ENCODE measurements at regions of chr4 and their contacts with region 1.

Region 1: GRCh38 chr4:6673660-6674499 is 19.8 kb upstream of the S100P start:
- DNase-seq: peak; percentile 96
- ATAC-seq: peak; percentile 77
- H3K4me3 Mint-ChIP-seq: peak overlapping the region; percentile 93
- H3K27ac Mint-ChIP-seq: peak overlapping the region; percentile 99
- H3K4me1 Mint-ChIP-seq: peaks cover 40% of the 10 kb centered on the region
- H3K27me3 Mint-ChIP-seq: no peaks in the 10 kb centered on the region

Region 2: DNA sequence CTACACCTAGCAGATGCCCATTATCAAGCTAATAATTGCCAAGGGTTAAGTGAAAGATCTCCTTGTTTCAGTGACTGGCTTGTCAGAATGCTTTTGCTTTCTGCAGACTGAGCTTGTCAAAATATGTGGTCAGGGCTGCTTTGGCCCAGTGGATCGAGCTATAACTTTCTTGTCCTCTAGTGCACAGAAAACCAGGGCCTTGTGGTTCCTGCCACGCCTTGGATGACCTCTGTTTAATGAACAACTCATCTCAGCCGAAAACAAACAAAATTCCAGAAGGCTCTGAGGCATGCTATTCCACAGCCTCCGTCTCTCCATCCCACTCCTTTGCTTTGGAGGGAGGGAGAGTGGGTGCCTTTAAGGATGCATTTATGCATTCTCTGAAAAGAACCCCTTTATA is 951.6 kb before region 1 on chr4:
- CTCF ChIA-PET with region 1: no interaction called
- POLR2A ChIA-PET with region 1: no interaction called
- intact Hi-C with region 1: no loop called
- DNase-seq: no peak
- ATAC-seq: no peak
- H3K4me3 Mint-ChIP-seq: no peak overlapping the region
- H3K27ac Mint-ChIP-seq: no peak overlapping the region
- H3K4me1 Mint-ChIP-seq: no peaks in the 10 kb centered on the region
- H3K27me3 Mint-ChIP-seq: peaks cover 6% of the 10 kb centered on the region

Region 3: GRCh38 chr4:6658597-6659075 is 15.2 kb before region 1 on chr4:
- CTCF ChIA-PET with region 1: interaction called, 6 read pairs
- POLR2A ChIA-PET with region 1: interaction called, 13 read pairs
- intact Hi-C with region 1: no loop called
- DNase-seq: peak; percentile 59
- ATAC-seq: peak; percentile 81
- H3K4me3 Mint-ChIP-seq: peak overlapping the region; percentile 43
- H3K27ac Mint-ChIP-seq: no peak overlapping the region
- H3K4me1 Mint-ChIP-seq: peaks cover 12% of the 10 kb centered on the region
- H3K27me3 Mint-ChIP-seq: peaks cover 21% of the 10 kb centered on the region

Region 4: GRCh38 chr4:6695660-6696630 is 22.1 kb after region 1 on chr4:
- CTCF ChIA-PET with region 1: interaction called, 44 read pairs
- POLR2A ChIA-PET with region 1: interaction called, 27 read pairs
- intact Hi-C with region 1: loop called (anchors 2 kb)
- DNase-seq: peak; percentile 62
- ATAC-seq: peak; percentile 74
- H3K4me3 Mint-ChIP-seq: peak overlapping the region; percentile 43
- H3K27ac Mint-ChIP-seq: peak overlapping the region; percentile 99
- H3K4me1 Mint-ChIP-seq: peaks cover 77% of the 10 kb centered on the region
- H3K27me3 Mint-ChIP-seq: no peaks in the 10 kb centered on the region

Region 5: GRCh38 chr4:6709230-6710114 is 35.6 kb after region 1 on chr4 and contains the start of gene MRFAP1L1:
- CTCF ChIA-PET with region 1: interaction called, 39 read pairs
- POLR2A ChIA-PET with region 1: interaction called, 42 read pairs
- intact Hi-C with region 1: loop called (anchors 1 kb)
- DNase-seq: peak; percentile 98
- ATAC-seq: peak; percentile 73
- H3K4me3 Mint-ChIP-seq: peak within 1 kb of the TSS; percentile 98
- H3K27ac Mint-ChIP-seq: peak within 1 kb of the TSS; percentile 98
- H3K4me1 Mint-ChIP-seq: peaks cover 46% of the 10 kb centered on the region
- H3K27me3 Mint-ChIP-seq: no peaks in the 10 kb centered on the region
- total RNA-seq, gene MRFAP1L1: 36.4 to 45.0 TPM

Region 6: GRCh38 chr4:6873792-6874461 is 200.0 kb after region 1 on chr4:
- CTCF ChIA-PET with region 1: interaction called, 17 read pairs
- POLR2A ChIA-PET with region 1: no interaction called
- intact Hi-C with region 1: loop called in 1 of 2 experiments (anchors 1 kb)
- DNase-seq: peak; percentile 90
- ATAC-seq: peak; percentile 94
- H3K4me3 Mint-ChIP-seq: no peak overlapping the region
- H3K27ac Mint-ChIP-seq: no peak overlapping the region
- H3K4me1 Mint-ChIP-seq: no peaks in the 10 kb centered on the region
- H3K27me3 Mint-ChIP-seq: no peaks in the 10 kb centered on the region

Region 7: GRCh38 chr4:6986781-6987587 is 313.1 kb after region 1 on chr4:
- CTCF ChIA-PET with region 1: no interaction called
- POLR2A ChIA-PET with region 1: no interaction called
- intact Hi-C with region 1: loop called in 1 of 2 experiments (anchors 1 kb)
- DNase-seq: peak; percentile 97
- ATAC-seq: peak; percentile 93
- H3K4me3 Mint-ChIP-seq: peak overlapping the region; percentile 96
- H3K27ac Mint-ChIP-seq: peak overlapping the region; percentile 93
- H3K4me1 Mint-ChIP-seq: peaks cover 66% of the 10 kb centered on the region
- H3K27me3 Mint-ChIP-seq: no peaks in the 10 kb centered on the region

Region 8: DNA sequence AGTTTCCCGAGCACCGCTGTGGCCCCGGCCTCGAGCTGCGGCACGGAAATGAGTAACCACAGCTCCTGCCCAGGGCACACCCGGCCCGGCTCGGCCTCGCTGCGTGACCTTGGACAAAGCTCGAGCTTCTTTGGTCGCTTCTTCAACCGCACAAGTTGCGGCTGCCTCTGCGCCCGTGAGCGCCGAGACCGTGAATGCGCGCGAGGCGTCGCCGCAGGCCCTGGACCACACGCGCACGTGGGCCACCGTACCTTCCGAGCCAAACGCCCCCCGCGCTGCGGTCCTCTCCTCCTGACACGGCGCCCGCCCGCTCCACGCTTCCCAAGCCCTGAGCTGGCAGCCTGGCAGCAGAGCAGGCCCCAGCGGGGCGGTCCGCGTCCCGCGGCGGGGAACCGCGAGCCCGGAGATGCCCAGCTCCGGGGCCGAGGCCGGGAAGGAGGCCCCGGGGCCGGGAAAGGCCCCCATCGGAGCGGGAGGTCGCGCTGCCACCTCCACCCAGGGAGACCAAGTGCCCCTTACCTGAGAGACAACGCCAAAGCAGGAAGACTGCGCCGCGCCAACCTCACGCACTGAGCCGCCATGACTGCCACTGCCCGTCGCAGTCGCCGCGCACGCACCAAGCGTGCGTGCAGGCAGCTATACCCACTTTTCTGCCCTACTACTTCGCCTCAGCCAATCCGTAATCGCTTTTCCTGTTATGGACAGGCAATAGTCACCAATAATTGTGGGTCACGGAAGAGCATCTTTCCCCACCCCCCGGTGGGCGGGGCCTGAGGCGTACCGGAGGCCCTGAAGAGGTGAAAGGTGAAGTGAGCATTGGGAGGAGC is 393.8 kb after region 1 on chr4 and contains the start of gene GRPEL1:
- CTCF ChIA-PET with region 1: interaction called, 4 read pairs
- POLR2A ChIA-PET with region 1: interaction called, 6 read pairs
- intact Hi-C with region 1: loop called in 1 of 2 experiments (anchors 1 kb)
- DNase-seq: peak; percentile 100
- ATAC-seq: peak; percentile 94
- H3K4me3 Mint-ChIP-seq: peak within 1 kb of the TSS; percentile 94
- H3K27ac Mint-ChIP-seq: peak within 1 kb of the TSS; percentile 94
- H3K4me1 Mint-ChIP-seq: peaks cover 43% of the 10 kb centered on the region
- H3K27me3 Mint-ChIP-seq: peaks cover 2% of the 10 kb centered on the region
- total RNA-seq, gene GRPEL1: 81.0 to 93.0 TPM